Endothelial cell of umbilical vein (primary cell): ENCODE measurements at regions of chr3 and their contacts with region 1.

Region 1: DNA sequence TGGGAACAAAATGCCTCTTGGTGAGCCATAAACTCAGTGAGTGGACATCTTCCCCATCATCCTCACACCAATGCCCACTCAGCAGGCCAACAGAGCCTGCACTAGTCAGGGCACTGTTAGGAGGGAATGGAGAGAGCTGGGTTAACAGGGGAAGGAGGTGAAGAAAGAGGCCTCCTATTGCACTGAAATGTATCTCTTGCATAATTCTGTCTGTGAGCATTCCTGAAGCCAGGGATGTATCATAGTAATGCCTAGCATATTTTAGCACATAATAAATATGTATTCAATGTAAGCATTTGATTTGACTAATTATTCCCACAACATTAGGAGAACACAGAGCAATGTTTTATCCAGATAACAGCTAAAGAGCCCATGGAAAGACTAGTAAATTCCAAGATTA is 81.2 kb downstream of the ANO10 start:
- DNase-seq: no peak
- H3K4me3 ChIP-seq: no peak overlapping the region
- H3K27ac ChIP-seq: no peak overlapping the region
- H3K4me1 ChIP-seq: peaks cover 3% of the 10 kb centered on the region
- H3K27me3 ChIP-seq: no peaks in the 10 kb centered on the region
- CTCF ChIP-seq: no peak
- POLR2A ChIP-seq: no peak

Region 2: GRCh38 chr3:43036621-43037423 is 503.8 kb before region 1 on chr3:
- CTCF ChIA-PET with region 1: no interaction called
- POLR2A ChIA-PET with region 1: no interaction called
- dilution Hi-C with region 1: no loop called
- intact Hi-C with region 1: no loop called
- DNase-seq: no peak
- H3K4me3 ChIP-seq: no peak overlapping the region
- H3K27ac ChIP-seq: no peak overlapping the region
- H3K4me1 ChIP-seq: no peaks in the 10 kb centered on the region
- H3K27me3 ChIP-seq: no peaks in the 10 kb centered on the region
- CTCF ChIP-seq: no peak
- POLR2A ChIP-seq: no peak

Region 3: GRCh38 chr3:43523454-43524053 is 17.1 kb before region 1 on chr3:
- CTCF ChIA-PET with region 1: interaction called, 11 read pairs
- POLR2A ChIA-PET with region 1: no interaction called
- dilution Hi-C with region 1: no loop called
- intact Hi-C with region 1: no loop called
- DNase-seq: no peak
- H3K4me3 ChIP-seq: no peak overlapping the region
- H3K27ac ChIP-seq: no peak overlapping the region
- H3K4me1 ChIP-seq: peaks cover 12% of the 10 kb centered on the region
- H3K27me3 ChIP-seq: no peaks in the 10 kb centered on the region
- CTCF ChIP-seq: no peak
- POLR2A ChIP-seq: no peak

Region 4: DNA sequence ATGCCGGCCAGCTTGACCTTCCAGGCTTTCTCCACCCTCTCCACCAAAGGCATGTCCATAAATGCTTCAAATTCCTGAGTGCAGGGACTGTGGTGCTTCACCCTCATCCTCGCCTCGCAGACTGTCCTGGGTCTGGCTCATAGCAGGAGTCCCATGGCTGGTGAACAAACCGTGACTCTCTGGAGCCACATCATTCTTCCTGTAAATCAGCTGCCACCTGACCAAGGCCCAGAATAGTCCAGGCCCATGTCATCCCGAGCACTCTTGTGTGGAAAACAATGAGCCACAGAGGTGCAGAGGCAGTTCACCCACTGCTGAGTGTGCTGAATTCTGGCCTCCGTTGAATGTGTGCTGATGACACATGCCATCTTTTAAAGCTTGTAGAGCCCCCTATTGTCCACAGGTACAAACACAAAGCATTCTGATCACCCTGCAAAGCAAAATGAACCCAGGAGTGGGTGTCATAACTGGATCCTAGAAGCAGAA is 218.7 kb after region 1 on chr3:
- CTCF ChIA-PET with region 1: interaction called, 8 read pairs
- POLR2A ChIA-PET with region 1: no interaction called
- dilution Hi-C with region 1: no loop called
- intact Hi-C with region 1: loop called (anchors 1 kb)
- DNase-seq: peak; percentile 65
- H3K4me3 ChIP-seq: no peak overlapping the region
- H3K27ac ChIP-seq: peak overlapping the region; percentile 1
- H3K4me1 ChIP-seq: peaks cover 23% of the 10 kb centered on the region
- H3K27me3 ChIP-seq: no peaks in the 10 kb centered on the region
- CTCF ChIP-seq: peak; percentile 8 to 22
- POLR2A ChIP-seq: no peak

Region 5: DNA sequence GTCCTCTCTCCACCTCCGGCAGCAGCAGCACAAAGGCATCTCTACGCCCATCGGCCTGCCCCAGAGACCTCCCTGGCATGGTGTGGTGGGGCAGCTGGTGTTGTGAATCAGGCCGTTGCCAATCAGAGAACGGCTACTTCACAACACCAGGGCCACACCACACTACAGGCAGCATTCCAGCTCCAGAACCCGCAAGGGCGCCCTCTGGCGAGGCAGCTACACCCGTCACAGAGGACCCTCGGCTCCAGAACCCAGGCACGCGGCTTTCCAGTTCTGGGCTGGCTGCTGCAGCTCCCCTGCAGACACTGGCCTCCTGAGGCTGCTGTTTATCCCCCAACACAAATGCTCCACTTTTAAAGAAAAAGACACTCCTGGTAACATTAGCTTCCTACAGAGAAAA is 573.5 kb after region 1 on chr3:
- CTCF ChIA-PET with region 1: interaction called, 17 read pairs
- POLR2A ChIA-PET with region 1: no interaction called
- dilution Hi-C with region 1: no loop called
- intact Hi-C with region 1: loop called (anchors 1 kb)
- DNase-seq: peak; percentile 34
- H3K4me3 ChIP-seq: no peak overlapping the region
- H3K27ac ChIP-seq: no peak overlapping the region
- H3K4me1 ChIP-seq: no peaks in the 10 kb centered on the region
- H3K27me3 ChIP-seq: peaks cover 0 to 2% of the 10 kb centered on the region in 2 experiments
- CTCF ChIP-seq: peak; percentile 37 to 79
- POLR2A ChIP-seq: no peak

Region 6: GRCh38 chr3:44235604-44236484 is 695.2 kb after region 1 on chr3:
- CTCF ChIA-PET with region 1: interaction called, 9 read pairs
- POLR2A ChIA-PET with region 1: no interaction called
- dilution Hi-C with region 1: no loop called
- intact Hi-C with region 1: loop called (anchors 1 kb)
- DNase-seq: peak; percentile 96
- H3K4me3 ChIP-seq: no peak overlapping the region
- H3K27ac ChIP-seq: peak overlapping the region; percentile 57
- H3K4me1 ChIP-seq: peaks cover 12% of the 10 kb centered on the region
- H3K27me3 ChIP-seq: no peaks in the 10 kb centered on the region
- CTCF ChIP-seq: peak; percentile 59 to 86
- POLR2A ChIP-seq: no peak